GM13977 (cell line): ENCODE measurements at regions of chr1 and their contacts with region 1.

Region 1: GRCh38 chr1:65027666-65028358 is 61.5 kb upstream of the JAK1 start:
- DNase-seq: no peak
- CTCF ChIP-seq: no peak

Region 2: GRCh38 chr1:64864018-64864940 is 163.5 kb before region 1 on chr1:
- in situ Hi-C with region 1: loop called (anchors 25 kb)
- DNase-seq: peak; percentile 76
- CTCF ChIP-seq: peak; percentile 5